ENCODE measurements at regions of chr6 and their contacts with region 1.

Region 1: DNA sequence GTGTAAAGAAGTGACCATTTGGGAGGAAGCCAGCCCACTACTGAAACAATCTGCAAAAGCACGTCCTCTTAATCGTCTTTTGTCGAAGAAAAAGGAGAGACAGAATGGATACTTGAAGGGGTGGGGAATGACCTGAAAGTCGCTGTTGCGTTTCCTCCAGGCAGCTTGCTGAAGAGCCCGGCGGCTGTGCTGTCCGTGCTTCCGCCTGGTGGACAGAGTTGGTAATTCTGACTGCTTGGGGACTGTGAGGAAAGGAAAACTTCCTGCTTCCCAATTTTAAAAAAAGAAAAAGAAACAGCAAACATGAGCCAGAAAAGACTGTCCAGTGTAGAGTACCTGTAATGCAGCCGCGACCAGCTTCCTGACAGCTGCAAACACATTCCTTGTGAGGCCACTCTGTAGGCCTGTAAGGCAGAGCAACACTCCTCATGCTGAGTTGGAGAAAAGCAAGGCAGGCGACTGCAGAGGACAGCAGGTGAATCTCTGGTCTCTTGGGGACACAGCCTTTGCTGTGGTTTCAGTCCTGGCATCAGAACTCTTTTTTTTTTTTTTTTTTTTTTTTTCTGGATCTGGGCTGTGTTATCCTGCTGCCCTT is 251.1 kb upstream of the TBX18 start:
- DNase-seq: peak; percentile 86

Region 2: DNA sequence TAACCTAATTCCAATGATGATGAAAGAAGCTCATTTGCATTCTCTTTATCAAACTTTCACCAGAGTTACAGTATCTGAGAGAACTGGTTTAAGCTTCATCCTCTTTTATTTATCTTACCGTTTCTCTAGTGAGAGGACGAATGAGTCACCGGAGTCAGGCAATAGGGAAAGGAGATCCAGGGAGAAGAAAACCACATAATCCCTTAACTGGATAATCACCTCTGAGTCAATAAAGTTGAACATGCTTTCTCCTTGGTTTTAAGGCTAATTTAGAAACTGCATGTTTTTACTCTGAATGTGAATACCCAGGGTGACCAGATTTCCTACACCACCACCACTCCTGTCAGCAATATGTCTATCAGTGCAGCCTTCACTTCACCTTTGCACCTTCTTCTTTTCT is 62.6 kb after region 1 on chr6:
- intact Hi-C with region 1: loop called in 1 of 2 experiments (anchors 2 kb)
- DNase-seq: no peak

Measured in posterior vena cava (tissue), 2 donors.